Esophagus squamous epithelium (tissue), 5 donors: ENCODE measurements at regions of chr2 and their contacts with region 1.

Region 1: GRCh38 chr2:230411570-230412370 is 4.2 kb upstream of the SP100 start:
- DNase-seq: no peak
- H3K4me3 ChIP-seq: peak overlapping the region; percentile 58 to 76 (median 75)
- H3K27ac ChIP-seq: peak overlapping the region; percentile 89 to 95 (median 92)
- H3K4me1 ChIP-seq: peaks cover 26 to 75% (median 36%) of the 10 kb centered on the region in 3 donors
- H3K27me3 ChIP-seq: no peaks in the 10 kb centered on the region
- CTCF ChIP-seq: no peak
- POLR2A ChIP-seq: peak in 1 of 4 donors; percentile 67

Region 2: GRCh38 chr2:230219419-230220331 is 192.1 kb before region 1 on chr2 and contains the start of gene SP110:
- intact Hi-C with region 1: loop called (anchors 10 kb)
- DNase-seq: peak; percentile 39
- H3K4me3 ChIP-seq: peak within 1 kb of the TSS; percentile 57 to 80 (median 70)
- H3K27ac ChIP-seq: peak within 1 kb of the TSS; percentile 80 to 91 (median 86)
- H3K4me1 ChIP-seq: peaks cover 9 to 44% (median 11%) of the 10 kb centered on the region in 3 donors
- H3K27me3 ChIP-seq: no peaks in the 10 kb centered on the region
- CTCF ChIP-seq: peak in 1 of 6 experiments; percentile 7
- POLR2A ChIP-seq: peak in 2 of 4 donors; percentile 18 to 49
- total RNA-seq, gene SP110: 7.2 to 21.7 (median 13.1) TPM

Region 3: DNA sequence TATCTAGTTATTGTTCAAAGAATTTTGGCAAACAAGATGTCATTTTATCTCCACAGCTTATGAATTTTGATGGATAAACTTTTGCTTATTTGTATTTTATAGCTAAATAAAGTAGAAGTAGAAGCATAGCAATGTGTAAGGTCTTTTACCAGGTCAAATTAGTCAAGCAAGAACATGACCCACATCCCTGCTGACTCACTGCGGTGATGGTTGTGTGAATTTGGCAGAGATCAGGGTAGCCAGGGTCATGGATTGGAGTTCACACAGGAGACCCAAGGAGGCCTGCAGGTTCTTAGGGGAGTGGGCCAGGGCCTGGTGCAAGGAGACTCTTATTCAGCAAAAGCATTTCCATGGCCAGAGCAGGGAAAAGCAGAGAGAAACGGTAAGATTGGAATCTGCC is 167.6 kb before region 1 on chr2:
- intact Hi-C with region 1: no loop called
- DNase-seq: no peak
- H3K4me3 ChIP-seq: no peak overlapping the region
- H3K27ac ChIP-seq: no peak overlapping the region
- H3K4me1 ChIP-seq: no peaks in the 10 kb centered on the region
- H3K27me3 ChIP-seq: no peaks in the 10 kb centered on the region
- CTCF ChIP-seq: no peak
- POLR2A ChIP-seq: no peak